Activated CD4-positive, alpha-beta T cell treated with anti-CD3 and anti-CD28 coated beads for 36 hours (primary cell): ENCODE measurements at regions of chr17 and their contacts with region 1.

Region 1: GRCh38 chr17:36777118-36777517 is 160.2 kb upstream of the LHX1 start:
- DNase-seq: peak; percentile 15
- ATAC-seq: no peak
- H3K4me3 Mint-ChIP-seq: no peak overlapping the region
- H3K27ac Mint-ChIP-seq: no peak overlapping the region
- H3K4me1 Mint-ChIP-seq: no peaks in the 10 kb centered on the region
- H3K27me3 Mint-ChIP-seq: peaks cover 27% of the 10 kb centered on the region

Region 2: GRCh38 chr17:36899250-36900159 is 122.4 kb after region 1 on chr17:
- CTCF ChIA-PET with region 1: no interaction called
- POLR2A ChIA-PET with region 1: no interaction called
- intact Hi-C with region 1: loop called in 1 of 2 experiments (anchors 10 kb)
- DNase-seq: no peak
- ATAC-seq: no peak
- H3K4me3 Mint-ChIP-seq: no peak overlapping the region
- H3K27ac Mint-ChIP-seq: no peak overlapping the region
- H3K4me1 Mint-ChIP-seq: no peaks in the 10 kb centered on the region
- H3K27me3 Mint-ChIP-seq: peaks cover 12% of the 10 kb centered on the region